ENCODE measurements at regions of chr3 and their contacts with region 1.

Region 1: DNA sequence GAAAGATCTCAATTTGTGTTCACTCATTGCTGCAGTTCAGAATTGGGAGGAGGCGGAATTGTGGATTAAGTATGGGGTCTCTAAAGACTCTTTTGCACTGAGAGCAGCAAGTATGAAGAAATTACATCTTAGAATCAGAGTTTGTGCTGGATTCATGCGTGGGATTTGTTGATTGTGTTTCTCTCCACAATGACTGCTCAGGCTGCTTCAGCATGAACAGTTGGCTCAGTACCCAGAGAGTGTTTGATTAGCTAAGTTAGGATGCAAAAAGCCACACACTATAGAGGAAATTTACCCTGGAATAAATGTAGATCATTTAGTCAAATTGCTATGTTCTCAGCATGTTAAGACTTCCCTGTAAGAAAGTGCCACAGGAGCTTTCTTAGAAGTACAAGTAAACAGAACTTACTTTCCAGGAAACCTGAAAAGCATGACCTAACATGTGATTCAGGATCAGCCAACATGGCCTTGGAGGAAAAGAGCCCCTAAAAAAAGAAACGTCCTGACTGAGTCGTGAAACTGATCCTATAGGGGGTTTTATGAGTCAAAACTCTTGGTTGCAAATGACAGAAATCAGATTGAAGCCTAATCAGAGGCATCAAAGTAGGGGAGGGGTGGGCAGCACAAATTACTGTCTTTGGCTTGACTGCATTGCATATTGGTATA is 32.6 kb downstream of the HHLA2 start:
- DNase-seq: no peak
- ATAC-seq: no peak
- H3K4me3 ChIP-seq: no peak overlapping the region
- H3K27ac ChIP-seq: no peak overlapping the region
- H3K4me1 ChIP-seq: no peaks in the 10 kb centered on the region
- H3K27me3 ChIP-seq: peaks cover 0 to 7% (median 0%) of the 10 kb centered on the region in 7 donors
- CTCF ChIP-seq: no peak

Region 2: DNA sequence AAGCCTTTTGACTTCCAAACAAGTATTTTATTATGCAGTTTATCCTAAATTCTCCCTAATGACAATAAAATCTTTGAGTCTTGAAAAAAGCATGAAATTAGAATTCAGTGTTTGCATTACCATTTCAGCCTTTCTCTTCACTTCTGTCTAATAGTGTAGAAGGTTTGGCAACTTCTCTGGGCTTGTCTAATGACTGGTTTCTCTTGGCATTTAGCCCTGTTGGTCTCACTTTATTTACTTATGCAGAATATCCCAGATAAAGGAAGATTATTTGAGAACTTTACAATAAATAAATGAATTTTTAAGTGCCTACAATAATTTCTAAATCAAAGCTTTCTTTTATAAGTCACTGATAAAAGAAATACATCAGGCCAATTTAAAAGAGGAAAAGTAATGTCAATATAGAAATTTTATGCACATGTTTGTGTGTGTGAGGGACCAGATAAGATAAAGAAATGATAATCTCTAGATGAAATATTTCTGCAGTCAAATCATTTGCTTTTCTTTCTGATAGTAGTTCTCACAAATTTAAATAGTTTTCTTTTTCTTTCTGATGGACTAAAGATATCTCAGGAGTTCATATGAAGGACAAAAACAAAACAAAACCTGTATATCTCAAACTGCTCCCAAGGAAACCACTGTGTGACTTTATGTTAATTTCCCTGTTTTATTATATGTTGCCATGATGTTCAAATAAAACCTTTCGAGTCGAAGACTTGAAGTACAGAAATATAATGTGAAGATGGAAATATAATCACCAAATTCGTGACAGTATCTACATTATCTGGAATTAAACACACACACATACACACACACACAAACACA is 1927.1 kb before region 1 on chr3:
- intact Hi-C with region 1: loop called in 1 of 10 experiments (anchors 5 kb)
- DNase-seq: no peak
- ATAC-seq: no peak
- H3K4me3 ChIP-seq: no peak overlapping the region
- H3K27ac ChIP-seq: no peak overlapping the region
- H3K4me1 ChIP-seq: no peaks in the 10 kb centered on the region
- H3K27me3 ChIP-seq: no peaks in the 10 kb centered on the region
- CTCF ChIP-seq: no peak